Psoas muscle (tissue), 8 donors: ENCODE measurements at regions of chr16 and their contacts with region 1.

Region 1: GRCh38 chr16:70470927-70471341 is 16.5 kb downstream of the FCSK start:
- DNase-seq: peak in 1 of 2 donors; percentile 46
- ATAC-seq: peak; percentile 55 to 72 (median 61)
- H3K4me3 ChIP-seq: no peak overlapping the region
- H3K27ac ChIP-seq: no peak overlapping the region
- H3K4me1 ChIP-seq: peaks cover 19% of the 10 kb centered on the region
- H3K27me3 ChIP-seq: no peaks in the 10 kb centered on the region
- CTCF ChIP-seq: peak; percentile 42

Region 2: DNA sequence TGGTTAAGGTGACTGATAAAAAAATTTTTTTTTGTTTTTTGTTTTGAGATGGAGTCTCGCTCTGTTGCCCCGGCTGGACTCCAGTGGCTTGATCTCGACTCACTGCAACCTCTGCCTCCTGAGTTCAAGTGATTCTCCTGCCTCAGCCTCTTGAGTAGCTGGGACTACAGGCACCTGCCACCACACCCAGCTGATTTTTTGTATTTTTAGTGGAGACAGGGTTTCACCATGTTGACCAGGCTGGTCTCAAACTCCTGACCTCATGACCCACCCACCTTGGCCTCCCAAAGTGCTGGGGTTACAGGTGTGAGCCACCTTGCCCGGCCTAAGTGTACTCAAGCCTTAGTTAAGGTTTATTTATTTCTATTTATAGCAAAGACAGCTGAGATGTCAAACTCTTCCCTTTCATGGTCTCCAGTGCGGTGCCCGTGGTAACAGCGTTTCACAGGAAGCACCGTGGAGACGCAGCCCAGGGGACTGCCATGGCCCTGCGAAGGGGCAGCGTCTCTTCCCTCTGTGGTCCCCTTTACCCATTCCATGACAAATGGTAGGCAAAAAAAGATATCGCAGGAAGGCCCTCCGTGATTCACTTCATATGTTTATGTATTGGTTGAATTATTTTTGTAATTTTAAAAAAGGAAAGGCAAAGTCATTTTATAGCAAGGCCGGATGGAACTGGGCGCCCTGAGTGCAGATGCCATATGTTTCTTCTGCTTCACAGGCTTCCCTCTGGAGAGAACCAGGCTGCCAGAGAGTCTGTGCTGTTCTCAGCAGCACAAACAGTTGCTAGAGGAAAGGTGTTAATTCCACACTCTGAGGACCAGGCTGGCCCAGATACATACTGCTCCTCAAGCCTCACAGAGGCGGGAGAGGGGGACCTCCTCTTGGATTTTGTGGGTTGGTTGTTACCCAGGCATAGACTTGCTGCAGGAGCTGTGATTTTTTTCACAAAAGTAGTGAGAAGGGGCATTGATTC is 95.0 kb before region 1 on chr16:
- intact Hi-C with region 1: loop called (anchors 5 kb)
- DNase-seq: no peak
- ATAC-seq: peak in 3 of 4 donors; percentile 20 to 37 (median 29)
- H3K4me3 ChIP-seq: no peak overlapping the region
- H3K27ac ChIP-seq: peak overlapping the region; percentile 62
- H3K4me1 ChIP-seq: peaks cover 21% of the 10 kb centered on the region
- H3K27me3 ChIP-seq: no peaks in the 10 kb centered on the region
- CTCF ChIP-seq: no peak

Region 3: DNA sequence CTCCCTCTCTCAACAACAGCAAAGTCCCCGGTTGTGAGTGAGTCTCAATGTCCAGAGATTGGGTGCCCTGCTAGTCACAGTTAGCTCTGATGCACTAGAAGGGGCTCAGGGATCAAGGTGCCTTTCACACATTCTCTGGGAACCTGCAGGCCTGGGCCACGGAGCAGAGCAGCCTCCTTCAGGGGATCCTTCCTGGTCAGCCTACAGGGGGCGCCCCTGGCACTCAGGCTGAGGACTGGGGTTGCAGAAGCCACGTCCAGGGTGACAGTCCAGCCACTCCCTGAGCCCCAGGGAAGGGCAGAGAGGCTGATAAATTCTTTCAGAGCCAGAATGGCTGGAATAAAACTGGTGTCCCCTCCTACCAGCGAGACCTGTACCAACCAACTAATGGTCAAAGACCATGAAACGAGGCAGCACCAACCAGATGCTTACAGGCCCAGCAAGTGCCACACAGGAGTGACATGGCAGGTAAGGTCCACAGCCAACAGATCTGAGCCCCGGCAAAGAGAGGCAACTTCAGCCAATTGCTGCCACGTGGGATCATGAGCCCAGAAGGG is 75.5 kb before region 1 on chr16:
- intact Hi-C with region 1: loop called (anchors 2 to 5 kb)
- DNase-seq: peak; percentile 71 to 87
- ATAC-seq: peak; percentile 67 to 75 (median 73)
- H3K4me3 ChIP-seq: no peak overlapping the region
- H3K27ac ChIP-seq: no peak overlapping the region
- H3K4me1 ChIP-seq: peaks cover 15% of the 10 kb centered on the region
- H3K27me3 ChIP-seq: no peaks in the 10 kb centered on the region
- CTCF ChIP-seq: peak; percentile 73

Region 4: GRCh38 chr16:70428178-70428998 is 42.5 kb before region 1 on chr16:
- intact Hi-C with region 1: loop called in 1 of 2 experiments (anchors 5 kb)
- DNase-seq: peak; percentile 97 to 99
- ATAC-seq: peak; percentile 94 to 95 (median 95)
- H3K4me3 ChIP-seq: peak overlapping the region; percentile 29
- H3K27ac ChIP-seq: peak overlapping the region; percentile 95
- H3K4me1 ChIP-seq: peaks cover 72% of the 10 kb centered on the region
- H3K27me3 ChIP-seq: no peaks in the 10 kb centered on the region
- CTCF ChIP-seq: no peak

Region 5: DNA sequence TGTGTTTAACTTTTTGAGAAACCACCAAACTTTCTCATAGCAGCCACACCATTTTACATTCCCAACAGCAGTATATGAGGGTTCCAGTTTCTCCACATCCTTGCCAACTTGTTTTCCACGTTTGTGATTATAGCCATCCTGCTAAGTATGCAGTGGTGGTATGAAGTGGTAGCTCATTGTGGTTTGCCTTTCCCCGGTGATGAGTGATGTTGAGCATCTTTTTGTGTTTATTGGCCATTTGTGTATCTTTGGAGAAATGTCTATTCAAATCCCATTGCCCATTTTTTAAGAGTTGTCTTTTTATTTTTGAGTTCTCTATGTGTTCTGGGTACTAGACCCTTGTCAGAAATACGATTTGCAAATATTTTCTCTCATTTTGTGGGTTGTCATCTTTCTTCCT is 70.1 kb after region 1 on chr16:
- intact Hi-C with region 1: no loop called
- DNase-seq: no peak
- ATAC-seq: no peak
- H3K4me3 ChIP-seq: no peak overlapping the region
- H3K27ac ChIP-seq: no peak overlapping the region
- H3K4me1 ChIP-seq: no peaks in the 10 kb centered on the region
- H3K27me3 ChIP-seq: no peaks in the 10 kb centered on the region
- CTCF ChIP-seq: no peak